ENCODE measurements at regions of chr17 and their contacts with region 1.

Region 1: DNA sequence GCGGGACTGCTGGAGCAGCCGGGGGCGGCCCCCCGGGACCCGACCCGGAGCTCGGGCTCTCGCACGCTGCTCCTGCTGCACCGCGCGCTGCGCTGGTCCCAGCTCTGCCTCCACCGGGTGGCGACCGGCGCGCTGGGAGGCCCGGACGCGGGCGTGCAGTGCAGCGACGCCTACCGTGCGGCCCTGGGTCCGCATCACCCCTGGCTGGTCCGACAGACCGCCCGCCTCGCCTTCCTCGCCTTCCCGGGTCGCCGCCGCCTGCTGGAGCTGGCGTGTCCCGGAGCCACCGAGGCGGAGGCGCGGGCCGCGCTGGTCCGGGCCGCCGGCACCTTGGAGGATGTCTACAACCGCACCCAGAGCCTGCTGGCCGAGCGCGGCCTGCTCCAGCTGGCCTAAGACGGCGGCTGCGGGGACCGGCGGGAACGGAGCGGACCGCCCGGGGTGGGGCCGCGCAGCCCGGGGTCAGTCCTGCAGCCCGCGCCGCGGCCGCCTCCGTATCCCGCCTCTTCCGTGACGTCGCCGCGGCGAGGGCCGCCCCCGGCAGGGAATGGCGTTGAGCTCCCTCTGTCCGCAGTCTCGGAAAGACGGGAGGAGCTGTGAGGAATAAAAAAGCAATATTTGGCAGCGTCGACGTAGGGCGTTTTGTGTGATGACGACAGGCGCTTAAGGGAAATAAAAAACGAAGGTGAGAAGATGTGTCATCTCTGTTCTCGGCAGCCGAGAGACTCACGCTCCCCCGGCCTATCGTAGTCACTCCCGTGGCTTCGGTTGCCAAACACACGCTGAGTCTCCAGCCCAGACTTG is 1.3 kb downstream of the GLTPD2 start:
- DNase-seq: peak; percentile 64 to 92
- H3K4me3 ChIP-seq: peak overlapping the region; percentile 79 to 85
- H3K27ac ChIP-seq: peak overlapping the region; percentile 94 to 96
- H3K4me1 ChIP-seq: peaks cover 9 to 31% of the 10 kb centered on the region in 2 donors
- H3K27me3 ChIP-seq: no peaks in the 10 kb centered on the region
- CTCF ChIP-seq: peak; percentile 60 to 94 (median 71)

Region 2: GRCh38 chr17:4709794-4710692 is 80.1 kb before region 1 on chr17 and contains the start of gene ARRB2:
- intact Hi-C with region 1: loop called (anchors 1 kb)
- DNase-seq: peak; percentile 97 to 99
- H3K4me3 ChIP-seq: peak within 1 kb of the TSS; percentile 52 to 77
- H3K27ac ChIP-seq: peak within 1 kb of the TSS; percentile 67 to 75
- H3K4me1 ChIP-seq: peaks cover 0 to 5% of the 10 kb centered on the region in 2 donors
- H3K27me3 ChIP-seq: no peaks in the 10 kb centered on the region
- CTCF ChIP-seq: peak; percentile 40 to 84 (median 62)
- total RNA-seq, gene ARRB2: 43.4 TPM

Region 3: GRCh38 chr17:4733073-4733531 is 57.0 kb before region 1 on chr17:
- intact Hi-C with region 1: loop called (anchors 5 kb)
- DNase-seq: no peak
- H3K4me3 ChIP-seq: no peak overlapping the region
- H3K27ac ChIP-seq: peak overlapping the region; percentile 16 to 40
- H3K4me1 ChIP-seq: peaks cover 6 to 9% of the 10 kb centered on the region in 2 donors
- H3K27me3 ChIP-seq: no peaks in the 10 kb centered on the region
- CTCF ChIP-seq: no peak

Region 4: GRCh38 chr17:4806777-4807604 is 16.9 kb after region 1 on chr17 and contains the start of gene PLD2:
- intact Hi-C with region 1: loop called (anchors 1 kb)
- DNase-seq: peak; percentile 53 to 90
- H3K4me3 ChIP-seq: peak within 1 kb of the TSS; percentile 71 to 91
- H3K27ac ChIP-seq: peak within 1 kb of the TSS; percentile 70 to 71
- H3K4me1 ChIP-seq: peaks cover 14 to 15% of the 10 kb centered on the region in 2 donors
- H3K27me3 ChIP-seq: no peaks in the 10 kb centered on the region
- CTCF ChIP-seq: no peak
- total RNA-seq, gene PLD2: 64.5 TPM

Region 5: GRCh38 chr17:4833178-4833940 is 43.3 kb after region 1 on chr17 and contains the start of gene MINK1:
- intact Hi-C with region 1: loop called (anchors 1 kb)
- DNase-seq: peak; percentile 59 to 93
- H3K4me3 ChIP-seq: peak within 1 kb of the TSS; percentile 75 to 82
- H3K27ac ChIP-seq: peak within 1 kb of the TSS; percentile 84 to 87
- H3K4me1 ChIP-seq: peaks cover 0 to 9% of the 10 kb centered on the region in 2 donors
- H3K27me3 ChIP-seq: no peaks in the 10 kb centered on the region
- CTCF ChIP-seq: no peak
- total RNA-seq, gene MINK1: 45.6 TPM

Region 6: DNA sequence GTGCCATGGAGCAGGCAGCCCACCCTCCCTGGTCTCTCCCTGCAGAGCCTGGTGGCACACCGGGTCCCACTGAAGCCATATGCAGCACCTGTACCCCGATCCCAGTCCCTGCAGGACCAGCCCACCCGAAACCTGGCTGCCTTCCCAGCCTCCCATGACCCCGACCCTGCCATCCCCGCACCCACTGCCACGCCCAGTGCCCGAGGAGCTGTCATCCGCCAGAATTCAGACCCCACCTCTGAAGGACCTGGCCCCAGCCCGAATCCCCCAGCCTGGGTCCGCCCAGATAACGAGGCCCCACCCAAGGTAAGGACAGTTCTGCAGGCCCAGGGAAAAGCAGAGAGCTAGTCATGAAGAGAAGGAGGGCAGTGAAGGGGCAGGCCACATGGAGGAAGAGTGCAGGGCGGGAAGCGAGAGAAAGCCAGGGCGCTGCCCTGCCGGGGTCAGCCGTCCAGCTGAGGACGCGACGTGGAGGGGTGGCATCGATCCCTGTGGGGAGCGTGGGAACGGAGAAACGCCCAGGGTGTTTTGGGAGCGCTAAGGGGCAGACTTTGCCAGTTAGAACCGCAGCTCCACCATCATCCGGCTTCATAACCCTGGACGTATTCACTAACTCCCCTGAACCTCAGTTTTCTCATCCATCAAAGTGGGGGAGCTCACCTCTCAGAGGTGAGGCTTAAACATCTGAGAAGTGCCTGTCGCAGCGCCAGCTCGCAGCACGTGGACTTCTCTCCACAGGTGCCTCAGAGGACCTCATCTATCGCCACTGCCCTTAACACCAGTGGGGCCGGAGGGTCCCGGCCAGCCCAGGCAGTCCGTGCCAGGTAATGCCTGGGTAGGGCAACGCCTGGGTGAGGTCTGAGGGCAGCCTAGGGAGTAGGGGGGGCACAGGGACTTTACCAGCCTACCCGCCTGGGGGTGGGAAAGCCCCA is 101.6 kb after region 1 on chr17:
- intact Hi-C with region 1: loop called (anchors 1 kb)
- DNase-seq: no peak
- H3K4me3 ChIP-seq: no peak overlapping the region
- H3K27ac ChIP-seq: no peak overlapping the region
- H3K4me1 ChIP-seq: no peaks in the 10 kb centered on the region
- H3K27me3 ChIP-seq: no peaks in the 10 kb centered on the region
- CTCF ChIP-seq: no peak

Measured in ascending aorta (tissue), 2 donors.